Heart left ventricle (tissue), 16 donors: ENCODE measurements at regions of chr9 and their contacts with region 1.

Region 1: DNA sequence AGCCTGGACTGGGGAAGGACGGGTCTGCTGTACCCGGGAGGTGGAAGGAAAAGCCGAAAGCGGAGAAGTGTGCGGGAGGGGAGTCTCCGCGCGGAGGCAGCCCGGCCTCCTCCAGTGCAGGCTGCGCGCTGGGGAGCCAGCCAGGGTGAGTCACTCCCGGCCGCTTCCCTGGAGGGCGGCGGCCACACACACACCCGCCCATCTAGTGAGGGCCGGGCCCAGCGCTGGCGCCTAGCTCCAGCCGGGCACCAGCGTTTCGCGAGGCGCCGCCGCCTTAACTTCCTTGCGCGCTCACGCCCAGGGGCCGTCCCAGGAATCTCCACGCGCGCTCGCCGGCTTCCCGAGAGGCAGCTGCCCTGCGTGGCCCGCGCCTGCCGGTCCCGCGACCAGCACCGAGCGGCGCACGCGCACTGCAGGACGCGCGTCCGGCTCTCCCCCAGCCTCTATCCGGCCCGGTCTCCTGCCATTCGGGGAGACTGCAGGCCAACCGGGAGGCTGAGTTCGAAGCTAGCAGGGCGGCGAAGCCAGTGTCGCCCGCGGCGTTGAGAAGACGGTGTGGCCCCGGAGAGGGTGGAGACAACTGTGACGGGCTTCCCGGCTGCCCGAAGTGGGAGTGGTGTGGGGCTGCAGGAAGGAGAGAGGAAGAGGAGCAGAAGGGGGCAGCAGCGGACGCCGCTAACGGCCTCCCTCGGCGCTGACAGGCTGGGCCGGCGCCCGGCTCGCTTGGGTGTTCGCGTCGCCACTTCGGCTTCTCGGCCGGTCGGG is at the start of gene JAK2:
- DNase-seq: peak; percentile 92 to 95 (median 94)
- ATAC-seq: peak; percentile 88 to 98 (median 96)
- H3K4me3 ChIP-seq: peak within 1 kb of the TSS; percentile 72 to 94 (median 79)
- H3K27ac ChIP-seq: peak within 1 kb of the TSS; percentile 93 to 100 (median 98)
- H3K4me1 ChIP-seq: peaks cover 0 to 67% (median 27%) of the 10 kb centered on the region in 12 donors
- H3K27me3 ChIP-seq: no peaks in the 10 kb centered on the region
- CTCF ChIP-seq: peak in 11 of 12 donors; percentile 31 to 74 (median 50)
- POLR2A ChIP-seq: peak in 1 of 2 donors; percentile 63
- total RNA-seq, gene JAK2: 17.0 to 62.9 (median 33.3) TPM

Region 2: GRCh38 chr9:4382722-4383317 is 602.0 kb before region 1 on chr9:
- intact Hi-C with region 1: loop called in 1 of 10 experiments (anchors 10 kb)
- DNase-seq: no peak
- ATAC-seq: no peak
- H3K4me3 ChIP-seq: no peak overlapping the region
- H3K27ac ChIP-seq: no peak overlapping the region
- H3K4me1 ChIP-seq: no peaks in the 10 kb centered on the region
- H3K27me3 ChIP-seq: no peaks in the 10 kb centered on the region
- CTCF ChIP-seq: peak; percentile 30 to 74 (median 62)
- POLR2A ChIP-seq: no peak

Region 3: GRCh38 chr9:4679268-4680172 is 305.3 kb before region 1 on chr9 and contains the start of gene CDC37L1:
- intact Hi-C with region 1: loop called in 3 of 10 experiments (anchors 10 kb)
- DNase-seq: peak; percentile 98 to 99 (median 99)
- ATAC-seq: peak; percentile 98 to 99 (median 99)
- H3K4me3 ChIP-seq: peak within 1 kb of the TSS; percentile 68 to 96 (median 82)
- H3K27ac ChIP-seq: peak within 1 kb of the TSS; percentile 93 to 99 (median 97)
- H3K4me1 ChIP-seq: peaks cover 0 to 36% (median 23%) of the 10 kb centered on the region in 12 donors
- H3K27me3 ChIP-seq: no peaks in the 10 kb centered on the region
- CTCF ChIP-seq: peak; percentile 41 to 81 (median 68)
- POLR2A ChIP-seq: peak; percentile 83 to 98
- total RNA-seq, gene CDC37L1: 29.3 to 100 (median 34.9) TPM

Region 4: GRCh38 chr9:4792572-4793458 is 192.0 kb before region 1 on chr9 and contains the start of gene RCL1:
- intact Hi-C with region 1: loop called in 8 of 10 experiments (anchors 1 to 10 kb)
- DNase-seq: peak; percentile 96 to 98 (median 96)
- ATAC-seq: peak; percentile 99 to 100 (median 99)
- H3K4me3 ChIP-seq: peak within 1 kb of the TSS; percentile 62 to 98 (median 88)
- H3K27ac ChIP-seq: peak within 1 kb of the TSS; percentile 46 to 88 (median 81)
- H3K4me1 ChIP-seq: peaks cover 0 to 27% (median 17%) of the 10 kb centered on the region in 12 donors
- H3K27me3 ChIP-seq: no peaks in the 10 kb centered on the region
- CTCF ChIP-seq: no peak
- POLR2A ChIP-seq: peak in 1 of 2 donors; percentile 67
- total RNA-seq, gene RCL1: 5.1 to 10.1 (median 7.2) TPM

Region 5: GRCh38 chr9:4855841-4856240 is 129.0 kb before region 1 on chr9:
- intact Hi-C with region 1: loop called in 1 of 10 experiments (anchors 10 kb)
- DNase-seq: no peak
- ATAC-seq: peak; percentile 23 to 73 (median 60)
- H3K4me3 ChIP-seq: no peak overlapping the region
- H3K27ac ChIP-seq: peak overlapping the region in 2 of 12 donors; percentile 46 to 47
- H3K4me1 ChIP-seq: peaks cover 0 to 14% (median 0%) of the 10 kb centered on the region in 12 donors
- H3K27me3 ChIP-seq: no peaks in the 10 kb centered on the region
- CTCF ChIP-seq: no peak
- POLR2A ChIP-seq: no peak

Region 6: DNA sequence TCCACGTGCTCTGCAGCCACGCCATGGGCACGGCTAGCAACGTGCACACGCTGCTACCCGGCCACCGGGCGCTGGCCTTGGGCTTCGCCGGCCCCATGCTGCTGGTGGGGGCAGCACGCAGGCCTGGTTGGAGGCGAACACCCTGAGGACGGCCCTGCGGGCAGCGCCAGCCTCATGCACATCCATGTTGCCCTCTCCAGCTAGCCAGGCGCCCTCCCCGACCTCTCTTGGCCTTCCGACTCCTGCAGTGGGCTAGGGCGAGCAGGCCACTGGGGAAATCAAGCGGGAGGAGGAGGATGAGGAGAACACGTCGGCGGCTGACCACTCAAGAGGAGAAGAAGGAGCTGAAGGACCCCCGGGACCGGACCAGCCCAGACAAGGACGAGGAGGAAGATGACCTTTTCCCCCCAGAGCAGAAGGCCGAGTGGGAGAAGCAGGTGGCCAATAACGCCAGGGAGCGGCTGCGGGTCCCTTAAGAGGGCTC is 127.3 kb after region 1 on chr9:
- intact Hi-C with region 1: no loop called
- DNase-seq: peak in 1 of 5 donors; percentile 16
- ATAC-seq: no peak
- H3K4me3 ChIP-seq: no peak overlapping the region
- H3K27ac ChIP-seq: no peak overlapping the region
- H3K4me1 ChIP-seq: no peaks in the 10 kb centered on the region
- H3K27me3 ChIP-seq: no peaks in the 10 kb centered on the region
- CTCF ChIP-seq: no peak
- POLR2A ChIP-seq: no peak

Region 7: GRCh38 chr9:5437254-5438216 is 452.7 kb after region 1 on chr9 and contains the start of gene PLGRKT:
- intact Hi-C with region 1: loop called in 2 of 10 experiments (anchors 2 to 10 kb)
- DNase-seq: peak; percentile 95 to 98 (median 97)
- ATAC-seq: peak; percentile 98 to 99 (median 99)
- H3K4me3 ChIP-seq: peak within 1 kb of the TSS; percentile 32 to 84 (median 75)
- H3K27ac ChIP-seq: peak within 1 kb of the TSS; percentile 83 to 99 (median 94)
- H3K4me1 ChIP-seq: peaks cover 0 to 24% (median 18%) of the 10 kb centered on the region in 12 donors
- H3K27me3 ChIP-seq: no peaks in the 10 kb centered on the region
- CTCF ChIP-seq: peak in 8 of 12 donors; percentile 8 to 56 (median 30)
- POLR2A ChIP-seq: peak in 1 of 2 donors; percentile 95
- total RNA-seq, gene PLGRKT: 20.8 to 37.2 (median 31.0) TPM

Region 8: DNA sequence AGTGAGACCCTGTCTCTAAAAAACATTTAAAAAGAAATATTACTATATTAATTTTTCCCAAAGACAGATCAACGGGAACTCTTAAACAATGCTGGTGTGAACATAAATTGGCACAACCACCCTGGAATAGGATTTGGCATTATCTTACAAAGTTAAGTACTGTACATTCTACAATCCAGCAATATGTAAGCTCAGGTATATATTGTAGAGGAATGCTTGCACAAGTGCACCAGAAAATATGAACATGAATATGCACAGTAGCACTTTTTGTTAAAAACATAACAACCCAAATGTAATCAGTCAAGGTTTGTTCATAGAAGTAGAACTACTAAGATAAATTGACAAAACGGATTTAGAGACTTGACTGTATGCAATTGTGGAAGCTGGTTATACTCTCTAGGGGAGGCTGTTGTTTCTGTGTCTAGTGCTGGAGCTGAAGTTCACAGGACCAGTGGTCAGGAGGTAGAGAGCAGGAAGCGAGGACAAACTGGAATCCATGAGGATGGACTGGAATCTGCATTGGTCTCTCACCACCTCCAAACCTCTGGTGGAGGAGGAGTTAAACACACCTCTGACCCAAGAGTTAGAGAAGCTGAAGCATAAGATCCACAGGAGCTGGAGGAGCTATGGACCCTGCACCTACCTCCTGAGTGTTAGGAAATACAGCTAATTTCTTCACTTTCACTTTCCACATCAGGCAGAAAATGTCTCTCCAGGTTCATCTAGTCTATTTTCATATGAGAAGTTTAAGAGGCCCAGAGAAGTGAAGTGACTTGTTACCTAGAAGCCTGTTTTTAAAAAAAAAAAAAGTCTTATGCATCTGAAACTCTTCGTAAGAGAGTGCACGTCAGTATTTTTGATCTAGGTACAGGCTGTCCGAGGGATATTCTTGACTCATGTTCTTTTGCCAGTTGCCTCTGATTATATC is 623.8 kb after region 1 on chr9:
- intact Hi-C with region 1: loop called in 1 of 10 experiments (anchors 10 kb)
- DNase-seq: no peak
- ATAC-seq: peak; percentile 82 to 89 (median 86)
- H3K4me3 ChIP-seq: peak overlapping the region in 11 of 12 donors; percentile 23 to 60 (median 45)
- H3K27ac ChIP-seq: peak overlapping the region; percentile 48 to 86 (median 64)
- H3K4me1 ChIP-seq: peaks cover 0 to 23% (median 6%) of the 10 kb centered on the region in 12 donors
- H3K27me3 ChIP-seq: no peaks in the 10 kb centered on the region
- CTCF ChIP-seq: peak in 4 of 12 donors; percentile 7 to 24 (median 20)
- POLR2A ChIP-seq: no peak